Activated CD4-positive, alpha-beta memory T cell treated with anti-CD3 and anti-CD28 coated beads for 36 hours (primary cell): ENCODE measurements at regions of chr7 and their contacts with region 1.

Region 1: GRCh38 chr7:6323967-6324701 is 51.7 kb upstream of the CYTH3 start:
- DNase-seq: no peak
- H3K4me3 Mint-ChIP-seq: no peak overlapping the region
- H3K27ac Mint-ChIP-seq: no peak overlapping the region
- H3K4me1 Mint-ChIP-seq: peaks cover 2% of the 10 kb centered on the region
- H3K27me3 Mint-ChIP-seq: no peaks in the 10 kb centered on the region

Region 2: GRCh38 chr7:5997222-5997808 is 326.8 kb before region 1 on chr7:
- CTCF ChIA-PET with region 1: interaction called, 18 read pairs
- POLR2A ChIA-PET with region 1: no interaction called
- intact Hi-C with region 1: no loop called
- DNase-seq: peak; percentile 39
- H3K4me3 Mint-ChIP-seq: no peak overlapping the region
- H3K27ac Mint-ChIP-seq: no peak overlapping the region
- H3K4me1 Mint-ChIP-seq: no peaks in the 10 kb centered on the region
- H3K27me3 Mint-ChIP-seq: no peaks in the 10 kb centered on the region

Region 3: DNA sequence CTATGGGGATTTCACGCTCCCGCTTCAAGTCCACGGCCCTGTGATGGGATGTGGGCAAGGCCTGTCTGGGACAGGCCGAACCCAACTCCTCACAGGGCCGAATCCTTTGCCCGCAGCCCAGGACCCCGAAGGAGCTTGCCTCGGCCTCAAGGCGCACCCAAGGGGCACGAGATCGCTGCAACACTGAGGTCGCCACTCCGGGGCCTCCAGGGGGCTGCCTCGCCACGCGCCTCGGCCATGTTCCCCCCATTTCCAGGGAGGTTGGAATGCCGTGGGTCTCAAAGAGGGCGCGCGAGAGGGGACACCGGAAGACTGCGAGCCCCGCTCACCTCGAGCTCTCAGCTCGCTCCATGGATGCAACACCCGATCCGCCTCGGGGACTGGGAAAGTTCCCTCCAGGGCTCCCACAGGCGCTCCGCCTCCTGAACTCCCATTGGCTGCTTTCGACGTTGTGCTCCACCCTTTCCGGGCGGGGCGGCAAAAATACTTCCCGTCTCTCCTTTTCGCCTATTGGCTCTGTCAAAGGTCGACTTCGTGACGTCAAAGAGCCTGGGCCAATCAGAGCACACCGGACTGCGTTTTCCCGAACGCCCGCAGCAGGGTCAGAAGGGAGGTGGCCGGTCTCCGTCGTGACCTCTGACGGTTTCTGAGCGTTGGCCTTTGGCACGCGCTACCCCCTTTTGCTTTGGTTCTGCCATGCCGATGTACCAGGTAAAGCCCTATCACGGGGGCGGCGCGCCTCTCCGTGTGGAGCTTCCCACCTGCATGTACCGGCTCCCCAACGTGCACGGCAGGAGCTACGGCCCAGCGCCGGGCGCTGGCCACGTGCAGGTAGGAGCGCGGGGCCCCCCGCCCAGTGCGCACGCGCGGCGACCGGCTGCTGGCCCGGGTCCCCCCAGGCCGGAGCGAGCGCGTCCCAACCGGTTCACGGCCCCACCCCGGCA is 315.2 kb before region 1 on chr7 and contains the starts of genes AIMP2 and PMS2:
- CTCF ChIA-PET with region 1: no interaction called
- POLR2A ChIA-PET with region 1: no interaction called
- intact Hi-C with region 1: loop called (anchors 5 kb)
- DNase-seq: peak; percentile 99
- H3K4me3 Mint-ChIP-seq: peak within 1 kb of the TSS; percentile 85
- H3K27ac Mint-ChIP-seq: peak within 1 kb of the TSS; percentile 92
- H3K4me1 Mint-ChIP-seq: peaks cover 41% of the 10 kb centered on the region
- H3K27me3 Mint-ChIP-seq: no peaks in the 10 kb centered on the region
- total RNA-seq, gene AIMP2: 38.6 to 39.5 TPM
- total RNA-seq, gene PMS2: 21.0 to 21.4 TPM

Region 4: GRCh38 chr7:6106140-6106904 is 217.8 kb before region 1 on chr7:
- CTCF ChIA-PET with region 1: interaction called, 11 read pairs
- POLR2A ChIA-PET with region 1: no interaction called
- intact Hi-C with region 1: no loop called
- DNase-seq: peak; percentile 62
- H3K4me3 Mint-ChIP-seq: peak overlapping the region; percentile 87
- H3K27ac Mint-ChIP-seq: peak overlapping the region; percentile 82
- H3K4me1 Mint-ChIP-seq: peaks cover 32% of the 10 kb centered on the region
- H3K27me3 Mint-ChIP-seq: no peaks in the 10 kb centered on the region

Region 5: GRCh38 chr7:6148724-6149360 is 175.3 kb before region 1 on chr7:
- CTCF ChIA-PET with region 1: no interaction called
- POLR2A ChIA-PET with region 1: no interaction called
- intact Hi-C with region 1: no loop called
- DNase-seq: no peak
- H3K4me3 Mint-ChIP-seq: no peak overlapping the region
- H3K27ac Mint-ChIP-seq: no peak overlapping the region
- H3K4me1 Mint-ChIP-seq: no peaks in the 10 kb centered on the region
- H3K27me3 Mint-ChIP-seq: no peaks in the 10 kb centered on the region

Region 6: DNA sequence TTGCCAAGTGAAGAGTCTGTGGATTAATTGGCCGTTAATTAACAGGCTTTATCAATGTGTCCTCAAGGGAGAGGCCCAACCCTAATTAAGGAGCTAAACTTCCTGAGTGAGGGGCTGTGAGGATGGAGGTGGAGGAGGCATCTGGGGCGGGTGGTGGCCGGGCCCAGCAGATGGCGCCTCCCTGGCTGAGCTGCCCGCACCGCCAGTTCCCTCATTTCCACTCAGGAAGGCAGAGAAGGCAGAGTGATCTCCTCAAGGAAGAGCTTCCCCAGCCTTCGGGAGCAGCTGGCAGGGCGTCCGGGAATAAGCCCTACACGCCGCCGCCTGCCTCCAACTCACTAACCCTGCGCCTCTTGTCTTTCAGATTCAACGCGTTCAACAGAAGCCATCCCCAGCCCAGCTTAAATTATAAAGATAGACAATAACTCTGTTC is 163.9 kb before region 1 on chr7:
- CTCF ChIA-PET with region 1: interaction called, 8 read pairs
- POLR2A ChIA-PET with region 1: no interaction called
- intact Hi-C with region 1: loop called (anchors 5 kb)
- DNase-seq: no peak
- H3K4me3 Mint-ChIP-seq: no peak overlapping the region
- H3K27ac Mint-ChIP-seq: no peak overlapping the region
- H3K4me1 Mint-ChIP-seq: no peaks in the 10 kb centered on the region
- H3K27me3 Mint-ChIP-seq: no peaks in the 10 kb centered on the region

Region 7: DNA sequence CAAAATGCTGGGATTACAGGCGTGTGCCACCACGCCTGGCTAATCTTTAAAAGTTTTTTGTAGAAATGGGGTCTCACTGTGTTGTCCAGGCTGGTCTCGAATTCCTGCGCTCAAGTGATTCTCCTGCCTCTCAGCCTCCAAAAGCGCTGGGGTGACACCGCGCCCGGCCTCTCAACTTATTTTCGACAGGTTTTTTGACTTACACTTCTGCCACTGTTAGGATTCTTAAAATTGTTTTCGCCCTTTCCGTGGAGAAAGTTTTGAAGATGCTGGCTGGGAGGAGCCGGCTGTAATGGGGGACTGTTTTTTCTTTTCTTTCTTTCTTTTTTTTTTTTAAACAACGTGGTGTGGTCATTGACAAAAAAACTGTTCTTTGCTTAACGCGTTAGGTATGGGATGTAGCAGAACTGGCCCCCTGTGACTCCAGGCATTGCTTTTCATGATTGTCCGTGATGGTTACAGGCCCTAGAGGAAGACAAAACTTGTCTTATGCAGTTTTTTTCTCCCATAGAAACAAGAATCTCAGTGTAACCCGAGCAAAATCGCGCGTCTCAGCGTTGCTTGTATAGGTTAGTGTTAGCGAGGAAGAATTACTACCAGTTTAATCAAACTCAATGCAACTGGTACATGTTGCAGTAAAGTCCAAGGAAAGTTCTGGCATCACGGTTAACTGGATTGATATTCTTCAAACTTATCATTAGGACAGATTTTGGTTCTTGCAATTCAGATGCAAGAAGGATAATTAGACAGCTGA is 51.4 kb after region 1 on chr7:
- CTCF ChIA-PET with region 1: no interaction called
- POLR2A ChIA-PET with region 1: no interaction called
- intact Hi-C with region 1: no loop called
- DNase-seq: peak; percentile 33
- H3K4me3 Mint-ChIP-seq: peak overlapping the region; percentile 77
- H3K27ac Mint-ChIP-seq: peak overlapping the region; percentile 74
- H3K4me1 Mint-ChIP-seq: peaks cover 36% of the 10 kb centered on the region
- H3K27me3 Mint-ChIP-seq: no peaks in the 10 kb centered on the region